OCI-LY7 (cell line): ENCODE measurements at regions of chr14 and their contacts with region 1.

Region 1: GRCh38 chr14:39169541-39169900 is 612 bp downstream of the TRAPPC6B start:
- DNase-seq: no peak
- H3K4me3 ChIP-seq: peak overlapping the region; percentile 87
- H3K27ac ChIP-seq: peak overlapping the region; percentile 75
- H3K4me1 ChIP-seq: peaks cover 56% of the 10 kb centered on the region
- CTCF ChIP-seq: no peak

Region 2: DNA sequence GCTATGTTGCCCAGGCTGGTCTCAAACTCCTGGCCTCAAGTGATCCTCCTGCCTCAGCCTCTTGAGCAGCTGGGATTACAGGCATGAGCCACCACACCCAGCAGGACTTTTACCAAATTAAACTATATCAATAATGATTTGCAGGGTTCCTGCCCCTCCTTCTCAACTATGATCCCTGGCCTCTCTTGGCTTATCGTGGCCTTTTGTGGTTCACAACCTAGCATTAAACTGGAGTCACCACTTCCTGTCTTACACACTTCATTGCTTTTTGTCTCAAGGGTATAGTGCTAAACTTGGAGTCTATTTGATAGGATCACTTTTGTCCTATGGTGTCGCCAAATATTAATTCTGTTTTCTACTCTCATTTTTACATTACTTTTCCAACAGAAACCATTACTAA is 131.0 kb before region 1 on chr14:
- CTCF ChIA-PET with region 1: no interaction called
- POLR2A ChIA-PET with region 1: no interaction called
- intact Hi-C with region 1: no loop called
- DNase-seq: peak; percentile 36
- H3K4me3 ChIP-seq: no peak overlapping the region
- H3K27ac ChIP-seq: no peak overlapping the region
- H3K4me1 ChIP-seq: peaks cover 9% of the 10 kb centered on the region
- CTCF ChIP-seq: no peak

Region 3: GRCh38 chr14:39114073-39114838 is 55.3 kb before region 1 on chr14 and contains the start of gene GEMIN2:
- CTCF ChIA-PET with region 1: no interaction called
- POLR2A ChIA-PET with region 1: interaction called, 15 read pairs
- intact Hi-C with region 1: loop called (anchors 1 kb)
- DNase-seq: peak; percentile 98
- H3K4me3 ChIP-seq: peak within 1 kb of the TSS; percentile 89
- H3K27ac ChIP-seq: peak within 1 kb of the TSS; percentile 86
- H3K4me1 ChIP-seq: peaks cover 31% of the 10 kb centered on the region
- CTCF ChIP-seq: no peak
- total RNA-seq, gene GEMIN2: 53.4 and 72.0 TPM in 2 replicates